Calu3 (cell line): ENCODE measurements at regions of chrX and their contacts with region 1.

Region 1: DNA sequence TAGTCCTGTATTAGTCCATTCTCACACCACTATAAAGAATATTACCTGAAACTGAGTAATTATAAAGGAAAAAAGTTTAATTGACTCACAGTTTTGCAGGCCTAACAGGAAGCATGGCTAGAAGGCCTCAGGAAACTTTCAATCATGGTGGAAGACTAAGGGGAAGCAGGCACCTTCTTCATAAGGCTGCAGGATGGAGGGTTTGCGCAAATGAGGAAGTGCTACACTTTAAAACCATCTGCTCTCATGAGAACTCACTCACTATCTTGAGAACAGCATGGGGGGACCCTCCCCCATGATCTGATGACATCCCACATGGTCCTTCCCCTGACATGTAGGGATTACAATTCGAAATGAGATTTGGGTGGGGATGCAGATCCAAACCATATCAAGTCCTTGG is 12.1 kb upstream of the MAGEA11 start:
- DNase-seq: no peak
- H3K4me3 Mint-ChIP-seq: no peak overlapping the region
- H3K27ac Mint-ChIP-seq: no peak overlapping the region
- H3K4me1 Mint-ChIP-seq: no peaks in the 10 kb centered on the region
- H3K27me3 Mint-ChIP-seq: peaks cover 51% of the 10 kb centered on the region
- CTCF ChIP-seq: no peak

Region 2: GRCh38 chrX:149762696-149763614 is 63.2 kb after region 1 on chrX:
- CTCF ChIA-PET with region 1: no interaction called
- intact Hi-C with region 1: loop called (anchors 10 kb)
- DNase-seq: no peak
- H3K4me3 Mint-ChIP-seq: no peak overlapping the region
- H3K27ac Mint-ChIP-seq: no peak overlapping the region
- H3K4me1 Mint-ChIP-seq: no peaks in the 10 kb centered on the region
- H3K27me3 Mint-ChIP-seq: peaks cover 12% of the 10 kb centered on the region
- CTCF ChIP-seq: no peak